ENCODE measurements at regions of chr1 and their contacts with region 1.

Region 1: DNA sequence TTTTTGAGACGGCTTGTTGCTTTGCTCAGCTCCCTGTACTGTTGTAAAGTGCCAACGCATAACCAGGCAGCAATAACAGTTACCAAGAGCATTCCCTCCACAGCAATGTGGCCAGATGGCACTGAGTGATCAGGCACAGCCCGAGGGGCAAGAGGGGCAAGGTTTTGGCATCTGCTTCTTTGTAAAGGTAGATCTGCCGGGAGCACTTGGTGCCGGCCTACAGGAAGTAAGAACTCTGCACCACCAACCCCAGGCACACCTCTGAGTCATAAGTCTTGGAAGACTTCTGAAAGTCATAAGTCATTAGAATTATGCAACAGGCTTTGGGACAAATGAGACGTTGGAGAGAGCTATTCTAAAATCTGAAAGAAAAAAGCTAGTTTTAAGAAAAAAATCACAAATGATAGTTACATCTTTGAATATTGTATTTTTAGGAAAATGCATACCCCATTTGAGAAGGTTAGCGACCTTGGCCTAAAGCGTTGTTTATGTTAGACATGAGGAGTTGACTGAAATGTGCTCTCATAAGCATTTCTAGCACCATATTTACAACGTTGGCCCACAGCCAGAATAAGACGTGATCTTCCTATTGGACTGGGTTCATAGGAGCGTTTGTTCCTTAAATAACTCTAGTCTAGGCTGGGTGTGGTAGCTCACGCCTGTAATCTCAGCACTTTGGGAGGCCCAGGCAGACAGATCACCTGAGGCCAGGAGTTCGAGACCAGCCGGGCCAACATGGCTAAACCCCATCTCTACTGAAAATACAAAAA is 37.7 kb upstream of the MAP10 start:
- DNase-seq: peak; percentile 100
- H3K4me3 Mint-ChIP-seq: peak overlapping the region; percentile 11
- H3K27ac Mint-ChIP-seq: peak overlapping the region; percentile 43
- H3K4me1 Mint-ChIP-seq: peaks cover 19% of the 10 kb centered on the region
- H3K27me3 Mint-ChIP-seq: no peaks in the 10 kb centered on the region
- CTCF ChIP-seq: no peak

Region 2: GRCh38 chr1:232726048-232726779 is 41.3 kb before region 1 on chr1:
- CTCF ChIA-PET with region 1: interaction called, 3 read pairs
- POLR2A ChIA-PET with region 1: interaction called, 10 read pairs
- intact Hi-C with region 1: no loop called
- DNase-seq: no peak
- H3K4me3 Mint-ChIP-seq: no peak overlapping the region
- H3K27ac Mint-ChIP-seq: peak overlapping the region; percentile 5
- H3K4me1 Mint-ChIP-seq: peaks cover 20% of the 10 kb centered on the region
- H3K27me3 Mint-ChIP-seq: no peaks in the 10 kb centered on the region
- CTCF ChIP-seq: no peak

Region 3: GRCh38 chr1:232786845-232787455 is 19.5 kb after region 1 on chr1:
- CTCF ChIA-PET with region 1: no interaction called
- POLR2A ChIA-PET with region 1: interaction called, 11 read pairs
- intact Hi-C with region 1: no loop called
- DNase-seq: peak; percentile 22
- H3K4me3 Mint-ChIP-seq: no peak overlapping the region
- H3K27ac Mint-ChIP-seq: no peak overlapping the region
- H3K4me1 Mint-ChIP-seq: peaks cover 6% of the 10 kb centered on the region
- H3K27me3 Mint-ChIP-seq: no peaks in the 10 kb centered on the region
- CTCF ChIP-seq: no peak

Region 4: DNA sequence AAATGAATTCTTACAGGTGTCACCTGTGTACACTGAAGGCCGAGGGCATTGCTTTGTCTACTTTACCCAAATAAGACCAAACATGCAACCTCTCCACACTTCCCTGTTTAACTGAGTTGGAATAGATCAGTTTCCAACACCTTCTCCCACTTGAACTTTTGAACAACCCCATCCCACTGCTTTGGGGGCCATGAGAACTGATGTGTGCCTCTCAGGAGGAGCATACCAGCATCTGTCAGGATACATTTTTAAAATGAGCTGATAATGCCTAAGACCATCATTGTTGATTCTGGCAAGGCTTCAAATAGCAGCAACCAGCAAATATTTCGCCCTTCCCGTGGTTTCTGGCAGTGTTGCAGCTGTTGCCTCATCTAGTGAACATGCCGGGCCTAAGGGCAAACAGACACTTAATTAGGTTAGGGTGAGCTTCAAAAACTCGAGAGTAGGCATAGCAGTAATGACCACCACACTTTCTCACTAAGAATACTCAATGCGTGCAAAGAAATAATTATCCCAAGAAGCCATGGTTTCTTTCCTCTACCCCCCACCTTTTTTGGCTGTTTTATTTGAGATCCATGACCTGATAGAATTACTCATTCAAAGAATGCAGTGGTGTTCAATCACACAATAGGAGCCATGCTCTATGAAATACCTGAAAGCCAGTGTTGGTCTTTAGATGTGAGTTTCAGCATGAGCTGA is 101.5 kb after region 1 on chr1:
- CTCF ChIA-PET with region 1: no interaction called
- POLR2A ChIA-PET with region 1: interaction called, 11 read pairs
- intact Hi-C with region 1: no loop called
- DNase-seq: peak; percentile 100
- H3K4me3 Mint-ChIP-seq: no peak overlapping the region
- H3K27ac Mint-ChIP-seq: peak overlapping the region; percentile 79
- H3K4me1 Mint-ChIP-seq: peaks cover 21% of the 10 kb centered on the region
- H3K27me3 Mint-ChIP-seq: no peaks in the 10 kb centered on the region
- CTCF ChIP-seq: no peak

Region 5: GRCh38 chr1:233005703-233006102 is 238.2 kb after region 1 on chr1:
- CTCF ChIA-PET with region 1: no interaction called
- POLR2A ChIA-PET with region 1: no interaction called
- intact Hi-C with region 1: no loop called
- DNase-seq: no peak
- H3K4me3 Mint-ChIP-seq: no peak overlapping the region
- H3K27ac Mint-ChIP-seq: no peak overlapping the region
- H3K4me1 Mint-ChIP-seq: no peaks in the 10 kb centered on the region
- H3K27me3 Mint-ChIP-seq: no peaks in the 10 kb centered on the region
- CTCF ChIP-seq: no peak

Region 6: GRCh38 chr1:233281711-233282581 is 514.5 kb after region 1 on chr1:
- CTCF ChIA-PET with region 1: no interaction called
- POLR2A ChIA-PET with region 1: no interaction called
- intact Hi-C with region 1: no loop called
- DNase-seq: no peak
- H3K4me3 Mint-ChIP-seq: no peak overlapping the region
- H3K27ac Mint-ChIP-seq: peak overlapping the region; percentile 4
- H3K4me1 Mint-ChIP-seq: peaks cover 10% of the 10 kb centered on the region
- H3K27me3 Mint-ChIP-seq: no peaks in the 10 kb centered on the region
- CTCF ChIP-seq: no peak